ENCODE measurements at regions of chr12 and their contacts with region 1.

Region 1: DNA sequence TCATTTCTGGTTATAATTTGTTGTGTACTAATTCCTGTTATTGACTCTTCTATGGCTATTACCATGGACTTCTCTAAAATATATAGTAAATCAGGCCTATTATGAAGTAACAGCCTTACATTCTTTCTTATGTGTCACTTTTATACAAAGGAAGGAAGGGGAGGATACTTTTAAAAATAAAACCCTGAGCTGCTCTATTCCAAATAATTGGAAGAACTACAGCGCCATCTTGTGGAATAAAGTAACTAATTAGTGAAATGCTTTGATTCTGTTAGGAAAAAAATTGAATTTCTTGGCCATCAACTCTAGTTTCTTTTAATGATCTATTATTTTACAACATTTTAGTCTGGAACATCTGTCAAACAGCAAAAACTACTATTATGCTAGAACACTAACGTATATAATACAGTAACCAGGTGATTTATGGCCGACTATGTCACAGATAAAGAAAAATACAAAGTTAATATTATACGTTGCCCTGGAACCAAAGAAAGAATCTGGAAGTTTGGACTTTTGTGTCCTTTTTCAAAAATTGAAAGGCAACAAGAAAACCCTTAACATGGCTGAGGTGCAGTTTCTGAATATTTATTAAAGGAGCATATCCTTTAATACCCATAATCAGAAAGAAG is 55.0 kb upstream of the NELL2 start:
- DNase-seq: no peak
- ATAC-seq: peak; percentile 55
- H3K4me3 Mint-ChIP-seq: no peak overlapping the region
- H3K27ac Mint-ChIP-seq: no peak overlapping the region
- H3K4me1 Mint-ChIP-seq: peaks cover 2% of the 10 kb centered on the region
- H3K27me3 Mint-ChIP-seq: peaks cover 2% of the 10 kb centered on the region

Region 2: DNA sequence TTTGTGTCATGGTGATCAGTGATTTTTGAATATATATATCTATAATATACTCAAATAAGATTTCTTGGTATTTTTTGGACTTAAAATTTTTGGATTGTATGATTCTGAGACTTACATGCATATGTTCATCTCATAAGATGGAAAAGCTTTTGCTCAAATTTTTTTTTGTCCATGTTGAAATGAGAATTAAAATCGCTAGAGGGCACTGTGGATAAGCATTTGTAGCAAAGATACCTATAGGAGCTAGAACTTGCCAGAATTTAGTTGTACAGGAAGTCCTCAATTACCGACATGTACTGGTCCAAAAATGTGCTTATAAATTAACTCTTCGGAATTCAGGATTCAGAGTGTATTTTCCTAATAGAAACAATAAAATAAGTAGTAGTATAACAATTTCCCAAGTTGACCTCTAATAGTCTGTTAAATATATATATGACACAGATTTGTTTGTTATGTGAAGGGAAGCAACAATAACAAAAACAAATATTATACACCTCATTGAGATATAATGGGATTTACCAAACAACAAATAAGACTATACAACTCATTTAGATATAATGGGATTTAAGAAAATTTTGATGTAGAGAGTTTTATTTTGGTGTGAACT is 915.6 kb before region 1 on chr12:
- CTCF ChIA-PET with region 1: interaction called, 12 read pairs
- POLR2A ChIA-PET with region 1: no interaction called
- DNase-seq: no peak
- ATAC-seq: no peak
- H3K4me3 Mint-ChIP-seq: no peak overlapping the region
- H3K27ac Mint-ChIP-seq: no peak overlapping the region
- H3K4me1 Mint-ChIP-seq: no peaks in the 10 kb centered on the region
- H3K27me3 Mint-ChIP-seq: no peaks in the 10 kb centered on the region

Region 3: DNA sequence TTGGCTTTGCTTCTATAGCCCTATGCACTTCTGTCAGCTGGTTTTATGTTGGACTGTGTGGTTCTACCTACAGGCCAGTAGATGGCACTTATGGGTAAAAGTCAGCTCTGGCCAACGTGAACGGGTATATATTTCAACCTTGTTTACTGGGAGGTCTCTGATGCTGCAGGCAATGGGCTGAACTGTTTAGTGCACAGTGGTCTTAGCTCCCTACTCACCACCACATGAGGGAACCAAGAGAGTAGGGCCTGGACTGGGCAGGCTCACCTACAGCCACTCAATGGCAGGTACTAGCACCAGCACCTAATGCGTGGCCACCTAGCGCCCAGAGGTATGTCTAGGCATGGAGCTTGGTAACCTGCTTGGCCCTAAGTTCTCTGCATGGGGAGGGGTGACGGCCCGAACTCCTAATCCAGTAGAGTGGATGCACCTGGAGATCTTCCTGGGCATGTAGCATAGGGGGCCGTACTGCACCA is 613.4 kb before region 1 on chr12:
- CTCF ChIA-PET with region 1: interaction called, 14 read pairs
- POLR2A ChIA-PET with region 1: no interaction called
- DNase-seq: peak; percentile 21
- ATAC-seq: peak; percentile 71
- H3K4me3 Mint-ChIP-seq: no peak overlapping the region
- H3K27ac Mint-ChIP-seq: no peak overlapping the region
- H3K4me1 Mint-ChIP-seq: no peaks in the 10 kb centered on the region
- H3K27me3 Mint-ChIP-seq: no peaks in the 10 kb centered on the region

Region 4: DNA sequence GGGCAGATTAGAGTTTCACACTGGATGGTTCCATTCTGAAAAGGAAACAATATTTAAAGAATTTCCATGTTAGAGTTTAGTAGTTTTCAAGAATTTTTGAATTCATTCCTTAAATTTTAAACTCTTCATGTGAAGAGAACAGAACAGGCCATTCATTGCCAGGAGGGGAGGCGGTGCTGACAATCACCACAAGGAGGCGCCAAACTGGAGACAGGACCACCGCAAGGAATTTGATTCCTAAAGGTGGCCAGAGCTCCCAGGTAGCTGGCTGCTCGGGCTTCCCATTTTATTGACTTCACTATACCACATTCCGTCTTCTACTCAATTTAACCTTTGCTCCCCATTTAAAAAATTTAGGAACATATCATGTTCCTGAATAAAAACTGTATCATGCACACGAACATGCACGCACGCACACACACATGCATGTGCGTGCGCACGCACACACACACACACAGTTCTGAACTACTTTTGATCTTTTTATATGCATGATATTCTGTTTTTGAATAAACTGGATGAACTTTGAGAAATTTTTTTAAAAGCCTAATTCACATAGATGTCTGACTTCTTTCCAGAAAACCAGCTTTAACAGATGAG is 156.2 kb before region 1 on chr12:
- CTCF ChIA-PET with region 1: interaction called, 11 read pairs
- POLR2A ChIA-PET with region 1: no interaction called
- DNase-seq: peak; percentile 72
- ATAC-seq: peak; percentile 57
- H3K4me3 Mint-ChIP-seq: no peak overlapping the region
- H3K27ac Mint-ChIP-seq: no peak overlapping the region
- H3K4me1 Mint-ChIP-seq: peaks cover 7% of the 10 kb centered on the region
- H3K27me3 Mint-ChIP-seq: no peaks in the 10 kb centered on the region

Region 5: DNA sequence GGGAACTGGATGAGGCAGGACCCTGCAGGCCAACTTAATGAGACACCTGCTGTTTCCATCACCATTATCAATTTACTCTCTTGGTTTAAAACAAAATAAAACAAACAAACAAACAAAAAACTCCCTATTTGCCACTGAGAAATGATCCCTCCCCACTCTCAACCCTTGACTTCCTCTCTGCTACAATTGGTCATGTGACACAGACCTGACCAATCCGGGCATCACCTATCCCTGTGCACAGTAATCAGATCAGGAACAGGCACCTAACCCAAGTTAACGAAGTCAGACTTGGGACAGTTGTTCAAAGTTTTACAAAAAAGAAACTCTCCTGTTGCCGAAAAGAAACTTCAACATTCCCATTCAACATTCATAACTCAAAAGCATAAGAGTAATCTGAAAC is 113.4 kb before region 1 on chr12:
- CTCF ChIA-PET with region 1: interaction called, 50 read pairs
- POLR2A ChIA-PET with region 1: no interaction called
- DNase-seq: no peak
- ATAC-seq: no peak
- H3K4me3 Mint-ChIP-seq: no peak overlapping the region
- H3K27ac Mint-ChIP-seq: peak overlapping the region; percentile 47
- H3K4me1 Mint-ChIP-seq: peaks cover 72% of the 10 kb centered on the region
- H3K27me3 Mint-ChIP-seq: no peaks in the 10 kb centered on the region

Region 6: DNA sequence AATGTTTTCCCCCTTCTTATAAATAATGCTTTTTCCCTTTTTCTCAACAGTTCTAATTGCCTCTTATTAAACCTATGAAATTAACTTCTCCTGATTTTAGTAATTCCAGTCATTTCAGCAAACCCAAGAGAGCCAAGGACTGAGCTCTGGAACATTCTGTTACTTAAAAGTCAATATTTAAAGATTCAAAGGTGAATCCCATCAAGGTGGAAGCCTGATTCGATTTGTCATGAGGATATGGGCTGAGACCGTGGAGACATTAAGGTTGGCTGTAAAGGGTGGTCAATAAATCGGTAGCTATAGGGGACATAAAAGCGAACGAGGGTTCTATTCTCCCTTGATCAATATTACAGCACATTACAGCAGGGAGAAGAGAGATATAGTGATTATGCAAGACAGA is 11.6 kb after region 1 on chr12:
- CTCF ChIA-PET with region 1: no interaction called
- POLR2A ChIA-PET with region 1: no interaction called
- DNase-seq: no peak
- ATAC-seq: no peak
- H3K4me3 Mint-ChIP-seq: no peak overlapping the region
- H3K27ac Mint-ChIP-seq: no peak overlapping the region
- H3K4me1 Mint-ChIP-seq: no peaks in the 10 kb centered on the region
- H3K27me3 Mint-ChIP-seq: peaks cover 11% of the 10 kb centered on the region

Region 7: GRCh38 chr12:45050751-45051571 is 119.9 kb after region 1 on chr12 and contains the start of gene DBX2:
- CTCF ChIA-PET with region 1: no interaction called
- POLR2A ChIA-PET with region 1: no interaction called
- DNase-seq: no peak
- ATAC-seq: peak; percentile 49
- H3K4me3 Mint-ChIP-seq: peak within 1 kb of the TSS; percentile 45
- H3K27ac Mint-ChIP-seq: no peak within 1 kb of the TSS
- H3K4me1 Mint-ChIP-seq: peaks cover 10% of the 10 kb centered on the region
- H3K27me3 Mint-ChIP-seq: peaks cover 62% of the 10 kb centered on the region
- total RNA-seq, gene DBX2: not detected